Heart right ventricle (tissue), 16 donors: ENCODE measurements at regions of chr1 and their contacts with region 1.

Region 1: DNA sequence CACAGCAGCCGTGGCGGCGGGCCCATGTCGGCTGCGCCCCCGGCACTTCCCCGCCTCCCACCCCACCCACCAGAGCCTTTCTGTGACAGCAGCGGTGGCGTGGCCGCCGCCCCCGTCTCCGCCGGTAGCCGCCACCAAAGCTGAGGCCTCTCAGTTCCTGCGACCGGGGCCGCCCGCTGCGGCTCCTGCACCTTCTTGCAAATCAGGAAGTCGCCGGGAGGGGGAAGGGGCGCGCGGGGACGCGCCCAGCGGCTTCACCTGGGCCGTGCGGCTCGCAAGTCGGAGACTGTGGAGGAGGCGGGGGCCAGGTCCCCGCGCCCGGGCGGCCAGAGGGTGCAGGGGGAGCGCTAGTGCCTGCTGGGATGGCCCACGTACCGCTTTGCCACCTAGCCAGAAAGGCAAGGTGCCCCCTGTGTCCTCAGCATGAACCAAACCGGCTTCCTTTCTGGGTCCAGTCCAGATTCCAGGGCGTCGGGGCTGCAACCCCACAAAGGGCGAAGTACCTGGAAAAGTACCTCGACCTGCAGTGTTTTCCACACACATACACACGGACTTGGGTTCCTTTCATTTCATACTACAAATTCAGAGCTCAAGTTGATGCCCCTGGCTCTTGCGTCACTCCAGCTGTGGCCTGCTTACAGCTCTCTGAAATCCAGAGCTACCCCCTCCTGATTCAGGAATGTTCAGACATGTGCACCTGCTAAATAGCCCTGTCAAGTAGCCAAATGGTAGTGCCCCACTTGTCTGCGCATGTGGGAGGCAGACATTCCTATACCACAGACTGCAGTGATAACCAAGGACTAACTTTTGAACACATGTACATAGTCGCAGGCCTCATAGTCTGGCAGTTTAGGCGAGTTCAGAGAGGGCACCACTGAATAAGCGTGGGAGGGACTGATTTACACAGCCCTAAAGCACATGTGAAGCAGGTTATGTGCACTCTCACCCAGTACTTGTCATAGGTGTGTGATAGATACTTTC is at the start of gene DENND1B:
- DNase-seq: peak; percentile 60 to 77
- ATAC-seq: peak; percentile 72 to 91 (median 80)
- H3K4me3 ChIP-seq: peak within 1 kb of the TSS; percentile 66 to 90 (median 78)
- H3K27ac ChIP-seq: peak within 1 kb of the TSS; percentile 82 to 96 (median 92)
- H3K4me1 ChIP-seq: peaks cover 0 to 67% (median 39%) of the 10 kb centered on the region in 9 donors
- H3K27me3 ChIP-seq: no peaks in the 10 kb centered on the region
- CTCF ChIP-seq: peak in 2 of 9 donors; percentile 4 to 8
- total RNA-seq, gene DENND1B: 21.1 to 36.3 (median 23.8) TPM

Region 2: GRCh38 chr1:197825541-197825940 is 50.0 kb after region 1 on chr1:
- intact Hi-C with region 1: loop called in 1 of 10 experiments (anchors 5 kb)
- DNase-seq: no peak
- ATAC-seq: no peak
- H3K4me3 ChIP-seq: no peak overlapping the region
- H3K27ac ChIP-seq: no peak overlapping the region
- H3K4me1 ChIP-seq: no peaks in the 10 kb centered on the region
- H3K27me3 ChIP-seq: no peaks in the 10 kb centered on the region
- CTCF ChIP-seq: no peak